HepG2 (cell line): ENCODE measurements at regions of chr4 and their contacts with region 1.

Region 1: DNA sequence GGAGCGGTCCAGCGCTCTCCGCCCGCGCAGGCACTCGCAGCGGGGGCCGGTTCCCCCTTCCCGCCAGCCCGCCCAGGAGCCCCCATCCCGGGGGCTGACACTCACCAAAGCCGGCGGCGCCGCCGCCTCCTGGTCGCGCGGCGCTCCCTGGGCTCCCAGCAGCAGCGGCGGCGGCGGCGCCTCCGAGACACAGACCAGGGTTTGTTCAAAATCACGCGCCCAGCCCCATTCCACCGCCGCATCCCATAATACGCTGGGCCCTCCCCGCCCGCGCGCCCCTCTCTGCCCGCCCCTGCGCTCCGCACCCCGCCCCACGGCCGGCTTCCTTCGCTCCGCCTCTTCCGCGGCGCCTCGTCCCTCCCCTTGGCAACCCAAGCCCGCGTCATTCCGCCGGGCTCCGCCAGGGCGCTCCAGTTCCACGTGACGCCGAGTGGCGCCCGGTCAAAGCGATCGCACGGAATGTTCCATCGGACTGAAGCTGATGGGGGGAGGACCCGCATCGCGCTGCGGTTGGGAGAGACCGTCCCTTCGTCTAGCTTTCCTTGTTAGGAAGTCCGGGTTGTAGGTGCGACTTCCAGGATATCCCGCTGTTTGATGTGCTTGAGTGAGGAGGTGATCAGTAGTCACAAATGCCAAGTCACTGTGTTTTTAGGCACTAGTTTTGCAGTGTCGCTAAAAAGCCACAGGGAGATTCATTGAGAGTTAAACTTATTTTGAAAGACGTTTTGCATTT is 2.2 kb upstream of the LIN54 start:
- DNase-seq: peak; percentile 96
- ATAC-seq: peak; percentile 84
- H3K4me3 ChIP-seq: peak overlapping the region; percentile 90 to 93 (median 92)
- H3K27ac ChIP-seq: peak overlapping the region; percentile 94
- H3K4me1 ChIP-seq: peaks cover 16% of the 10 kb centered on the region
- H3K27me3 ChIP-seq: no peaks in the 10 kb centered on the region; a peak in 1 of 5 replicates
- CTCF ChIP-seq: peak; percentile 83
- EP300 ChIP-seq: peak in 1 of 2 experiments; percentile 55; a peak in 1 of 4 replicates
- POLR2A ChIP-seq: peak; percentile 69 to 85
- RAD21 ChIP-seq: peak; percentile 62; the same call in 1 of the 2 replicates

Region 2: GRCh38 chr4:82890901-82891706 is 121.7 kb before region 1 on chr4 and contains the start of gene SEC31A:
- CTCF ChIA-PET with region 1: no interaction called
- POLR2A ChIA-PET with region 1: no interaction called
- in situ Hi-C with region 1: loop called (anchors 5 kb)
- intact Hi-C with region 1: loop called (anchors 5 kb)
- DNase-seq: peak; percentile 91
- ATAC-seq: peak; percentile 91
- H3K4me3 ChIP-seq: peak within 1 kb of the TSS; percentile 81 to 99 (median 91)
- H3K27ac ChIP-seq: peak within 1 kb of the TSS; percentile 98
- H3K4me1 ChIP-seq: peaks cover 41% of the 10 kb centered on the region
- H3K27me3 ChIP-seq: no peaks in the 10 kb centered on the region; a peak in 2 of 5 replicates
- CTCF ChIP-seq: peak; percentile 71
- EP300 ChIP-seq: peak in 1 of 2 experiments; percentile 59; a peak in 3 of 4 replicates
- POLR2A ChIP-seq: peak; percentile 94 to 97
- RAD21 ChIP-seq: peak; percentile 15; the same call in 1 of the 2 replicates
- total RNA-seq, gene SEC31A: 231 and 351 TPM in 2 replicates

Region 3: DNA sequence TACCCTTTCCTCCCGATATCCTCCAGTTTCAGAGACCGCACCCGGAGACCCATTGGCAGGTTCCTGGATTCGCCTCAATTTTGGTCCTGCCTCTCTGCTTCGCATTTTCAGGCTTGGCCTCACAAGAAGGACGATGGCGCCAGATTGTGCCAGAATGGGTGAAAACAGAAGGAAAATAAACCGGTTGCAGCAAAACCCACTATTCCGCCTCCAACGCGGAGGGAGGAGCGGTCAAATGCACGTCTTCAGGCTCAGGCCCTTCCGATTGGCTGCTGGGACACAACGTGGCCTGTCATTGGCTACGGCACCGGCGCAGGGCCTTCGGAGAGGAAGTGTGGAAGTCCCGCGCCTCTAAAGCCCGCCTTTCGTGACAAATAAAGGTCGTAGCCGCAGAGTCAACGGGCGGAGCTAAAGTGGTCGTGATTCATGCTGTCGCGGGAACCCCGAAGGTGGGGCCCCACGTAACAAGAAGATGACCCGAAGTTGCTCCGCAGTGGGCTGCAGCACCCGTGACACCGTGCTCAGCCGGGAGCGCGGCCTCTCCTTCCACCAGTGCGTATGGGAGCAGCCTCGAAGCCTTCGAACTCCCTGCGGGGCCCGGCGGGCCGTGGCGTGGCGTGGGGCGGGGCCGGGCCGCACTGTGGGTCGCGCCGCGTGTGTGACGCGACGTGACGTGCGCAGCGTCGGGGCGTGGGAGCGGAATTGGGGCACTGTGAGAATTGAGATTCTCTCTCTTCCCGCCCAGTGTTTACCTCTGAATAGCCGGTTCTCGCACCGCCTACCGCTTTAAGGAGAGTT is 112.3 kb before region 1 on chr4 and contains the start of gene THAP9:
- CTCF ChIA-PET with region 1: no interaction called
- POLR2A ChIA-PET with region 1: interaction called, 15 read pairs
- in situ Hi-C with region 1: no loop called
- intact Hi-C with region 1: no loop called
- DNase-seq: peak; percentile 98
- ATAC-seq: peak; percentile 98
- H3K4me3 ChIP-seq: peak within 1 kb of the TSS; percentile 77 to 88 (median 82)
- H3K27ac ChIP-seq: peak within 1 kb of the TSS; percentile 91
- H3K4me1 ChIP-seq: peaks cover 39% of the 10 kb centered on the region
- H3K27me3 ChIP-seq: no peaks in the 10 kb centered on the region; a peak in 1 of 5 replicates
- CTCF ChIP-seq: peak; percentile 12; the same call in 1 of the 2 replicates
- EP300 ChIP-seq: no peak
- POLR2A ChIP-seq: peak; percentile 73 to 92
- RAD21 ChIP-seq: 0 out of 2 replicates have a peak, but pooled peaks have one; percentile 17
- total RNA-seq, gene THAP9: 7.2 and 11.4 TPM in 2 replicates

Region 4: GRCh38 chr4:82989575-82990429 is 23.1 kb before region 1 on chr4:
- CTCF ChIA-PET with region 1: no interaction called
- POLR2A ChIA-PET with region 1: interaction called, 4 read pairs
- in situ Hi-C with region 1: no loop called
- intact Hi-C with region 1: loop called (anchors 1 kb)
- DNase-seq: peak; percentile 27
- ATAC-seq: peak; percentile 88
- H3K4me3 ChIP-seq: peak overlapping the region; percentile 9 to 35 (median 17); a peak in 4 of 6 replicates
- H3K27ac ChIP-seq: peak overlapping the region; percentile 67
- H3K4me1 ChIP-seq: peaks cover 42% of the 10 kb centered on the region
- H3K27me3 ChIP-seq: no peaks in the 10 kb centered on the region
- CTCF ChIP-seq: no peak
- EP300 ChIP-seq: no peak
- POLR2A ChIP-seq: no peak
- RAD21 ChIP-seq: no peak

Region 5: DNA sequence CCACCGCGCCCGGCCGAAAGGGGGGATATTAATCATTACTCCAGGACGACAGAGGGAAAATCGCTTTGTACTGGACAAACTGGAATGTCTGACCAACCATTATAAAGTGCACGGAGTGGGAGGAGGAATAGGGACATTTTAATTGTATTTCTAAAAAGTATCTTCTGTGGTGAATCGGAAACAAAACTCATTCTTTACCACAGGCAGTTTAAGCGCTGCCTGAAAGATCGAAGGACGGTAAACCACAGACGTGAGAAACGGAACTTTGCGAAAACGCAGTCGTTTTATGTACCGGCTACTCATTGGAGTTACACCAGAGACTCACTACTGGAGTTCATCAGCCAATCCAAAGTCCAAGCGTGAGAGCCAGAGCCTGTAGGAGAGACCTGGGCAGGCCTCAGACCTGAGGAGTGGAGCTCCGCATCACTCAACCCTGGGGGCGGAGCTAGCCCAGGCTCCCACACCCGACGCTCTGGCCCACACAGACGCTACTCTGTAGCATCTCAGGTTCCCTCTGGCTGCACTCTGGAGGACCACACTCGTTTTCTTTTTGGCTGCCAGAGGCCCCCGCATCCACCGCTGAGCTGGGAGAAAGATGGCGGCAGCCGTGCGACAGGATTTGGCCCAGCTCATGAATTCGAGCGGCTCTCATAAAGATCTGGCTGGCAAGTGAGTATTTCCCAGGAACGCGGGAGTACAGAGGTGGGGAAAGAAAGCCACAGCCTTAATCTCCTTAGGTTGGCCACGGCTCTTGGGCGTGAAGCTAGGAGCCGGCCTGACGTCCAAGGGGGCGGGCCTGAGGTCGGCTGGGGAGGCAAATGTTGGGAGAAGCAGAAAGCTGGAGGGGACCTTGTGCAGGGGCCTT is 22.0 kb after region 1 on chr4 and contains the start of gene COPS4:
- CTCF ChIA-PET with region 1: no interaction called
- POLR2A ChIA-PET with region 1: interaction called, 96 read pairs
- in situ Hi-C with region 1: no loop called
- intact Hi-C with region 1: loop called (anchors 1 kb)
- DNase-seq: peak; percentile 100
- ATAC-seq: peak; percentile 99
- H3K4me3 ChIP-seq: peak within 1 kb of the TSS; percentile 88 to 95 (median 92)
- H3K27ac ChIP-seq: peak within 1 kb of the TSS; percentile 98
- H3K4me1 ChIP-seq: peaks cover 43% of the 10 kb centered on the region
- H3K27me3 ChIP-seq: no peaks in the 10 kb centered on the region; a peak in 2 of 5 replicates
- CTCF ChIP-seq: no peak; the same call in 1 of the 2 replicates
- EP300 ChIP-seq: peak in 1 of 2 experiments; percentile 53; a peak in 1 of 4 replicates
- POLR2A ChIP-seq: peak; percentile 60 to 93; a peak in 3 of 4 replicates
- RAD21 ChIP-seq: peak; percentile 47; the same call in 1 of the 2 replicates
- total RNA-seq, gene COPS4: 52.5 and 90.4 TPM in 2 replicates